ENCODE measurements at regions of chr17 and their contacts with region 1.

Region 1: GRCh38 chr17:64306850-64307463 is 43.9 kb upstream of the TEX2 start:
- DNase-seq: peak; percentile 32 to 86 (median 60)
- ATAC-seq: peak in 3 of 4 experiments; percentile 51 to 69 (median 55)
- H3K4me3 ChIP-seq: no peak overlapping the region
- H3K4me3 Mint-ChIP-seq: no peak overlapping the region
- H3K27ac ChIP-seq: no peak overlapping the region
- H3K27ac Mint-ChIP-seq: no peak overlapping the region
- H3K4me1 ChIP-seq: no peaks in the 10 kb centered on the region
- H3K4me1 Mint-ChIP-seq: peaks cover 0 to 2% (median 0%) of the 10 kb centered on the region in 3 donors
- H3K27me3 ChIP-seq: peaks cover 0 to 3% of the 10 kb centered on the region in 2 experiments
- H3K27me3 Mint-ChIP-seq: no peaks in the 10 kb centered on the region

Region 2: DNA sequence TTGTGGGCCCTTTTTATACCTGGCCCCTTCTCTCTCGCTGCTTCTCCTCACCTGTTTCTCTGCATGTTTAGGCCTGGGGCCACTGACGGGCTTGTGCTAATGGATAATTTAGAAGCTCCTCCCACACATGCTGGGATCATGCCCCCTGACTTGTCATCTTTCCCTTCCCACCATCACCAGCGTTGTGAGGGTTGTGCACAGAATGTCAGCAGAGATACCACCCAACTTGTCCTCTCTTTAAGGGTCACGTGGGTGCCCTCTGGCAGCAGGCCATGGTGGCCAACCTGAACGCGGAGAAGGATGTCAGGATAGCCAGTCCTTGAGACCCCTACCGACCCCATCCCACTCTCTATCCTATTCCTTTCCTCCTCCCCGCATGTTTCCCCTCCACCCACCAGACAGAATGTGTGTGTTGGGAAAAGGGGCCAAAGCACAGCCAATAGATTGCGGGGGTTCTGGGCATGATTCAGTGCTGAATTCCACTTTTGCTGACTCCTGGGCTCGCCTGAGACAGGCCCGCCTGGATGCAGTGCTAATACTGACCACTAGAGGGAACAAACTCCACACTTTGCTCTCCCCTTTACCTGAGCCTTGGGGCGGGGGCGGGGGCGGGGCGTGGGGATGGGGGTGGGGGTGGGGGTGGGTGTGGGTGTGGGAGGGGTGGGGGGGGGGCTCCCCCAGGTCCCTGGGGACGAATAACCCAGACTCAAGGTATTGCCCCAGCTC is 424.9 kb before region 1 on chr17 and contains the start of gene GH2:
- CTCF ChIA-PET with region 1: no interaction called
- POLR2A ChIA-PET with region 1: no interaction called
- DNase-seq: peak in 34 of 35 experiments; percentile 17 to 81 (median 48)
- ATAC-seq: peak; percentile 81 to 88 (median 83)
- H3K4me3 ChIP-seq: no peak within 1 kb of the TSS
- H3K4me3 Mint-ChIP-seq: no peak within 1 kb of the TSS
- H3K27ac ChIP-seq: no peak within 1 kb of the TSS
- H3K27ac Mint-ChIP-seq: no peak within 1 kb of the TSS
- H3K4me1 ChIP-seq: peaks cover 0 to 3% of the 10 kb centered on the region in 2 experiments
- H3K4me1 Mint-ChIP-seq: peaks cover 0 to 1% (median 0%) of the 10 kb centered on the region in 3 donors
- H3K27me3 ChIP-seq: peaks cover 0 to 17% of the 10 kb centered on the region in 2 experiments
- H3K27me3 Mint-ChIP-seq: no peaks in the 10 kb centered on the region
- total RNA-seq, gene GH2: not detected

Region 3: DNA sequence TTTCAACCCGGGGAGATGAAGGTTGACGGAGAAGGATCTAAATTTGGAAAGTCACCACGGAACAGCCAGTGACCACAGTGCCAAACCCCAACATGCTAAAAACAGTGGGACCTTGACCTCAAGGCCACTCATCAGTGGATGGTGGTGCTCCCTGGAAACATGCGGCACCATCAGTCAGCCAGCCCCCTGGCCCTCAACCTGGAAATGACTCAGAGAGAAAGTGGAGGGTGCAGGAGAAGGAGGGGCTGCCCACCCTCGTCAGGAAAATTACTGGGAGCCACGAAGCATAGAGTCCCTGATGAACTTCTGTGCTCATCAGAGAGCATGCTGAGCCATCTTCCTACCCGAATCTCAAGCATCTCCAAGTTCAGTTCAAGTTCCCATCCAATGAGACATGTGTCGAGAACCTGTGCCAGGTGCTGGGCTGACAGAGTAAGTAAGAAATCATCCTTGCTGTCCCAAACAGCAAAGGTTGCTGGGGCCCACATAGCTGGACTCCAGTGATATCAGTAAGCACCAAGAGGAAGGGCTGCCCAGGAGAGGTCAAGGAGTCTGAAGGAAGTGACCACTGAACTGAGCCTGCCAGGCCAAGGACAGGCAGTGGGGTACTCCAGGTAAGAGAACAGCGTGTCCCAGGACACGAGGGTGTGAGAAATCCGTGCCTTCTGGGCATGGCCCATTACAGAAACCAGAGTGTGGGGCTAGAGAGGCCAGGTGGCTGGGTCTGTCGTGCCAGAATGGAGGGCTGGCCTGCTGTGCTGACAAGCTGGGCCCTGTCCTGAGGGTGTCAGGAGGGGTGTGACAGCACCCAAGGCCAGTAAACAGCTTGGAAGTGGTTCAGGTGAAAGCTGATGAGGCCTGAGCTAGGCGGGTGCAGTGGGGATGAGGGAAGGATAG is 78.5 kb after region 1 on chr17:
- CTCF ChIA-PET with region 1: interaction called in 1 of 2 experiments, 3 read pairs
- POLR2A ChIA-PET with region 1: interaction called in 1 of 2 experiments, 11 read pairs
- DNase-seq: peak in 7 of 35 experiments; percentile 8 to 42 (median 32)
- ATAC-seq: peak in 3 of 4 experiments; percentile 28 to 63 (median 32)
- H3K4me3 ChIP-seq: no peak overlapping the region
- H3K4me3 Mint-ChIP-seq: peak overlapping the region in 2 of 3 donors; percentile 42 to 50
- H3K27ac ChIP-seq: no peak overlapping the region
- H3K27ac Mint-ChIP-seq: peak overlapping the region in 1 of 2 donors; percentile 68
- H3K4me1 ChIP-seq: peaks cover 16 to 64% of the 10 kb centered on the region in 2 experiments
- H3K4me1 Mint-ChIP-seq: peaks cover 49 to 75% (median 72%) of the 10 kb centered on the region in 3 donors
- H3K27me3 ChIP-seq: no peaks in the 10 kb centered on the region
- H3K27me3 Mint-ChIP-seq: peaks cover 0 to 4% of the 10 kb centered on the region in 2 donors

Region 4: GRCh38 chr17:65219124-65219523 is 912.2 kb after region 1 on chr17:
- CTCF ChIA-PET with region 1: no interaction called
- POLR2A ChIA-PET with region 1: no interaction called
- DNase-seq: no peak
- ATAC-seq: no peak
- H3K4me3 ChIP-seq: no peak overlapping the region
- H3K4me3 Mint-ChIP-seq: no peak overlapping the region
- H3K27ac ChIP-seq: no peak overlapping the region
- H3K27ac Mint-ChIP-seq: no peak overlapping the region
- H3K4me1 ChIP-seq: no peaks in the 10 kb centered on the region
- H3K4me1 Mint-ChIP-seq: no peaks in the 10 kb centered on the region
- H3K27me3 ChIP-seq: peaks cover 0 to 10% of the 10 kb centered on the region in 2 experiments
- H3K27me3 Mint-ChIP-seq: peaks cover 15 to 21% of the 10 kb centered on the region in 2 donors

Measured in T-cell (primary cell).